Heart left ventricle (tissue), 16 donors: ENCODE measurements at regions of chr7 and their contacts with region 1.

Region 1: GRCh38 chr7:3333861-3334260 is 32.8 kb downstream of the SDK1 start:
- DNase-seq: no peak
- ATAC-seq: no peak
- H3K4me3 ChIP-seq: no peak overlapping the region
- H3K27ac ChIP-seq: no peak overlapping the region
- H3K4me1 ChIP-seq: peaks cover 0 to 9% (median 0%) of the 10 kb centered on the region in 12 donors
- H3K27me3 ChIP-seq: peaks cover 0 to 12% (median 0%) of the 10 kb centered on the region in 9 donors
- CTCF ChIP-seq: no peak
- POLR2A ChIP-seq: no peak

Region 2: GRCh38 chr7:3280445-3280844 is 53.4 kb before region 1 on chr7:
- intact Hi-C with region 1: loop called in 1 of 10 experiments (anchors 2 kb)
- DNase-seq: no peak
- ATAC-seq: peak in 2 of 4 donors; percentile 59 to 68
- H3K4me3 ChIP-seq: no peak overlapping the region
- H3K27ac ChIP-seq: no peak overlapping the region
- H3K4me1 ChIP-seq: no peaks in the 10 kb centered on the region
- H3K27me3 ChIP-seq: no peaks in the 10 kb centered on the region
- CTCF ChIP-seq: no peak
- POLR2A ChIP-seq: no peak

Region 3: DNA sequence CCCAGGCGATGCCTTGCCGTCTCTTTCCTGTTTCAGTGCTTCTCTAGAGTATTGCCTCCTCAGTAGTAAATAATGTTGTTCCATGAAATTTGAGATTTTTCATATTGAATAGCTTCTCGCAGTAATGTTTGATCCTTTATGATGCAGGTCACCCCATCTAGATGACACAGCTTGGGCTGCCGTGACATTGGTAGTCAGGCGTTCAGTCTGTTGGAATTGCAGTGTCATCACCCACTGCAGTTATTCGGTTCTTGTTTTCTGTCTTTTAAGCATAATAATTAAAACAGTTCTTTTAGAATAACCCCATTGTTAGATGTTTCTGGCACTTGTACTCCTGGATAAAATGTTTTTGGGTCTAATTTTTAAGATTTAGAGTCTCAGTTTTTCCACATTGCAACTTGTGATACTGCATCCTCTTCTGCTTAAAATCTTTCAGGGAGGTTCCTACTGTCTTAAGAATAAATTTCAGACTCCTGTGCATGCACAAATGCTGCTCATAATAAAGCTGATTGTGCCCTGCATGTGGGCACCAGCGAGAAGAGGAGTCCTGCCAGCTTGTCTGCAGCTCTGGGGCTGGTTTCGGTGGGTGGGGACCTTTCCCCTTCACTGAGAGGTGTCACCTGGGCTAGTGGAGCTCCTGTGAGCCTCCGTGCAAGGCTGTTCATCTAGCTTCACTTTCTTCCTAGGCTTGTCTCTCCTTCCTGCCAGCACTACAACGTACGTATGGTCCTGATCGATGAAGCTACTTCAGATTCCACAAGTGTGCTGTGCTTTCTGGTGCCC is 12.0 kb after region 1 on chr7:
- intact Hi-C with region 1: no loop called
- DNase-seq: no peak
- ATAC-seq: no peak
- H3K4me3 ChIP-seq: no peak overlapping the region
- H3K27ac ChIP-seq: no peak overlapping the region
- H3K4me1 ChIP-seq: no peaks in the 10 kb centered on the region
- H3K27me3 ChIP-seq: peaks cover 0 to 2% (median 0%) of the 10 kb centered on the region in 9 donors
- CTCF ChIP-seq: no peak
- POLR2A ChIP-seq: no peak

Region 4: GRCh38 chr7:3575753-3576531 is 242.1 kb after region 1 on chr7:
- intact Hi-C with region 1: no loop called
- DNase-seq: no peak
- ATAC-seq: no peak
- H3K4me3 ChIP-seq: no peak overlapping the region
- H3K27ac ChIP-seq: no peak overlapping the region
- H3K4me1 ChIP-seq: no peaks in the 10 kb centered on the region
- H3K27me3 ChIP-seq: no peaks in the 10 kb centered on the region
- CTCF ChIP-seq: no peak
- POLR2A ChIP-seq: no peak